ENCODE measurements at regions of chr21 and their contacts with region 1.

Region 1: DNA sequence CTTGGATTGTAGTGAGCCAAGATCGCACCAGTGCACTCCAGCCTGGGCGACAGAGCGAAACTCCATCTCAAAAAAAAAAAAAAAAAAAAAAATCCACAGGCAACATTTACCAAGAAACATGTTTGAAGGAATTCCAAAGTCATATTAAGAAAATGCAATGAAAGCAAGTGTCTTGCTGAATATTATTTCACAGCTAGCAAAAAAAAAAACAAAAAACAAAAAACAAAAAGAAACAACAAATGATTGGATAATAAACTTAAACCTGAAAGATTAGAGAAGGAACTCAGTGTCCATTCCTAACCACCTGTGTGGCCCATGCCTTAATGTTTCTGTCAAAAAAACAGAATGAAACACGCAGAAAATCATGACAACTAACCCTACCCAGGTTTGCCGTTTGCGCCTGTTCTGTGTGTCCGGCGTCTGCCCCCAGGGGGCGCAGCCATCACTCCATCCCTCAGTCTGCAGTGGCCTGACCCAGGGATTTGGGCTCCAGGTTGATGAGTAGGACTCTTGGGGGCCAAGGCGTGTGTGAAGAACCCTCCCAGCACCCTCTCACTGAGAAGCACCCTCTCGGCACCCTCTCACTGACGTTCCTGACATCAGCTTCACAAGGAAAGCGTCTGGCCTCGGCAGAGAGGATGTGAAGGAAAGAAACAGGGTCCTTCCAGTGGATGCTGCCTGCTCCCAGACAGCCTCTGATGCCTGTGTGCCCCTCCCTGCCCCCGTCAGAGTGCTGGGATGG is 19.2 kb upstream of the PTTG1IP start:
- DNase-seq: peak; percentile 83
- ATAC-seq: peak; percentile 77
- H3K4me3 Mint-ChIP-seq: no peak overlapping the region
- H3K27ac Mint-ChIP-seq: no peak overlapping the region
- H3K4me1 Mint-ChIP-seq: no peaks in the 10 kb centered on the region
- H3K27me3 Mint-ChIP-seq: no peaks in the 10 kb centered on the region
- CTCF ChIP-seq: peak; percentile 90

Region 2: GRCh38 chr21:44907966-44908895 is 15.5 kb after region 1 on chr21:
- CTCF ChIA-PET with region 1: interaction called, 25 read pairs
- POLR2A ChIA-PET with region 1: no interaction called
- DNase-seq: no peak
- ATAC-seq: peak; percentile 13; the same call in 1 of the 2 replicates
- H3K4me3 Mint-ChIP-seq: no peak overlapping the region
- H3K27ac Mint-ChIP-seq: no peak overlapping the region; the same call in 1 of the 2 replicates
- H3K4me1 Mint-ChIP-seq: no peaks in the 10 kb centered on the region; the same call in 1 of the 2 replicates
- H3K27me3 Mint-ChIP-seq: no peaks in the 10 kb centered on the region
- CTCF ChIP-seq: no peak

Region 3: GRCh38 chr21:44927587-44928461 is 35.1 kb after region 1 on chr21:
- CTCF ChIA-PET with region 1: interaction called, 10 read pairs
- POLR2A ChIA-PET with region 1: no interaction called
- DNase-seq: no peak
- ATAC-seq: peak; percentile 36
- H3K4me3 Mint-ChIP-seq: no peak overlapping the region
- H3K27ac Mint-ChIP-seq: no peak overlapping the region; the same call in 1 of the 2 replicates
- H3K4me1 Mint-ChIP-seq: peaks cover 41% of the 10 kb centered on the region
- H3K27me3 Mint-ChIP-seq: peaks cover 56% of the 10 kb centered on the region
- CTCF ChIP-seq: no peak

Measured in WTC11 (cell line).